ENCODE measurements at regions of chr18 and their contacts with region 1.

Region 1: GRCh38 chr18:57881818-57882413 is 78.8 kb upstream of the ATP8B1 start:
- DNase-seq: peak; percentile 56 to 65
- H3K4me3 ChIP-seq: no peak overlapping the region
- H3K4me3 Mint-ChIP-seq: no peak overlapping the region
- H3K27ac Mint-ChIP-seq: no peak overlapping the region
- H3K4me1 ChIP-seq: peaks cover 4% of the 10 kb centered on the region; the same call in 1 of the 2 replicates
- H3K4me1 Mint-ChIP-seq: no peaks in the 10 kb centered on the region
- H3K27me3 ChIP-seq: no peaks in the 10 kb centered on the region
- H3K27me3 Mint-ChIP-seq: no peaks in the 10 kb centered on the region
- CTCF ChIP-seq: peak; percentile 62 to 66

Region 2: DNA sequence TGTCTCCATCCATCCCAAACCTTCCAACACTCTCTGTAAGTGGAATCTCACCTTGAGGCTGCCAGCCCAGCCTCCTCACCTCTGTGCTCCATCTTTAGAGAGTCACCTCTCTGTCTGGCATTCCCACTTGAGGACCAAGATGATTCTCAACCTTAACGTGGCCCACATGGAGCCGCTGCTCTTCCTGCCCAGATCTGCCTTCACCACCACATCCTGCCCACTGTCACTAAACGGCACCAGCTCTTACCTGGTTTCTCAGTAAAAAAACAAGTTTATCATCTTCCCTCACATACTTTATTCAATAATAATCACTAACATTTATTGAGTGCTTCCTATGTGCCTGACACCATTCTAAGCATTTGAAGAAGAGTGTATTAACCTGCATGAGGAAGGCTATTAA is 242.6 kb after region 1 on chr18:
- CTCF ChIA-PET with region 1: interaction called, 7 read pairs
- POLR2A ChIA-PET with region 1: no interaction called
- intact Hi-C with region 1: loop called (anchors 5 kb)
- DNase-seq: no peak
- H3K4me3 ChIP-seq: no peak overlapping the region
- H3K4me3 Mint-ChIP-seq: no peak overlapping the region
- H3K27ac Mint-ChIP-seq: no peak overlapping the region
- H3K4me1 ChIP-seq: no peaks in the 10 kb centered on the region
- H3K4me1 Mint-ChIP-seq: peaks cover 12% of the 10 kb centered on the region
- H3K27me3 ChIP-seq: no peaks in the 10 kb centered on the region
- H3K27me3 Mint-ChIP-seq: no peaks in the 10 kb centered on the region
- CTCF ChIP-seq: no peak

Region 3: GRCh38 chr18:58180738-58181353 is 298.9 kb after region 1 on chr18:
- CTCF ChIA-PET with region 1: no interaction called
- POLR2A ChIA-PET with region 1: no interaction called
- intact Hi-C with region 1: loop called (anchors 1 kb)
- DNase-seq: peak; percentile 44 to 53
- H3K4me3 ChIP-seq: no peak overlapping the region
- H3K4me3 Mint-ChIP-seq: no peak overlapping the region
- H3K27ac Mint-ChIP-seq: no peak overlapping the region
- H3K4me1 ChIP-seq: peaks cover 14% of the 10 kb centered on the region
- H3K4me1 Mint-ChIP-seq: peaks cover 20% of the 10 kb centered on the region
- H3K27me3 ChIP-seq: no peaks in the 10 kb centered on the region
- H3K27me3 Mint-ChIP-seq: no peaks in the 10 kb centered on the region
- CTCF ChIP-seq: peak; percentile 44 to 62

Region 4: GRCh38 chr18:58367425-58368140 is 485.7 kb after region 1 on chr18:
- CTCF ChIA-PET with region 1: no interaction called
- POLR2A ChIA-PET with region 1: no interaction called
- intact Hi-C with region 1: no loop called
- DNase-seq: no peak
- H3K4me3 ChIP-seq: no peak overlapping the region
- H3K4me3 Mint-ChIP-seq: no peak overlapping the region
- H3K27ac Mint-ChIP-seq: no peak overlapping the region
- H3K4me1 ChIP-seq: no peaks in the 10 kb centered on the region
- H3K4me1 Mint-ChIP-seq: no peaks in the 10 kb centered on the region
- H3K27me3 ChIP-seq: no peaks in the 10 kb centered on the region
- H3K27me3 Mint-ChIP-seq: no peaks in the 10 kb centered on the region
- CTCF ChIP-seq: no peak

Region 5: DNA sequence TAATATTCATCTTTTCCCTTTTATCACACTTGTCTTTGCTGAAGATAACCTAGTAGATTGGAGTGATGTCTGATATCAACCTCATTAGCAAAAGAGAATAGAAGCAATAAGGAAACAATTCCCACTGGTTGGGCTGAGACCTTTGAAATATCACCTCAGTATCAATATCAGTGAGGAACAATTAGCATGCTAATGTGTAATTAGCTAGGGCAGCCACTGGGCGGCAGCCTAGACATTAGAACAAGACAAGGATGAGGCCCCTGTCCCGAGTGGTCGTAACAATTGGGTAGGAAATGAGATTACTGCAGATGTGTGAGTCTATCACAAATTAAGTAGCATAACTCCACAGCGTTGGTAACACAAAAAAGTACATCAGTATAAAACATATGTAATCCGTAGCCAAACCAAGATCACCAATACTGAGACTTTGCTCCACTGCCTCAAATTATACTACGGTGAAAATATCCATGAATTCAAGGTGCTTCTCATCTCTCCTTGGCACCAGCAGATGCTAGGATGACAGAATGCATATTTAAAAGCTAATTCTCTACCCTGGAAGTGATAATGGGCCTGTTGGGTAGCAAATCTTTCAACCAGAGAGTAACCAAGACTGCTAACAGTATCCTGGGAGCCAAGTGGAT is 647.9 kb after region 1 on chr18:
- CTCF ChIA-PET with region 1: no interaction called
- POLR2A ChIA-PET with region 1: no interaction called
- intact Hi-C with region 1: no loop called
- DNase-seq: peak; percentile 66
- H3K4me3 ChIP-seq: no peak overlapping the region
- H3K4me3 Mint-ChIP-seq: no peak overlapping the region
- H3K27ac Mint-ChIP-seq: no peak overlapping the region
- H3K4me1 ChIP-seq: peaks cover 48% of the 10 kb centered on the region
- H3K4me1 Mint-ChIP-seq: no peaks in the 10 kb centered on the region
- H3K27me3 ChIP-seq: no peaks in the 10 kb centered on the region
- H3K27me3 Mint-ChIP-seq: no peaks in the 10 kb centered on the region
- CTCF ChIP-seq: peak; percentile 63 to 64

Measured in Caco-2 (cell line).